Activated CD4-positive, alpha-beta T cell treated with anti-CD3 and anti-CD28 coated beads, Interleukin-2, amount 10 ng/mL, durations not matched to agents 24 days and 14 days (primary cell): ENCODE measurements at regions of chr19 and their contacts with region 1.

Region 1: DNA sequence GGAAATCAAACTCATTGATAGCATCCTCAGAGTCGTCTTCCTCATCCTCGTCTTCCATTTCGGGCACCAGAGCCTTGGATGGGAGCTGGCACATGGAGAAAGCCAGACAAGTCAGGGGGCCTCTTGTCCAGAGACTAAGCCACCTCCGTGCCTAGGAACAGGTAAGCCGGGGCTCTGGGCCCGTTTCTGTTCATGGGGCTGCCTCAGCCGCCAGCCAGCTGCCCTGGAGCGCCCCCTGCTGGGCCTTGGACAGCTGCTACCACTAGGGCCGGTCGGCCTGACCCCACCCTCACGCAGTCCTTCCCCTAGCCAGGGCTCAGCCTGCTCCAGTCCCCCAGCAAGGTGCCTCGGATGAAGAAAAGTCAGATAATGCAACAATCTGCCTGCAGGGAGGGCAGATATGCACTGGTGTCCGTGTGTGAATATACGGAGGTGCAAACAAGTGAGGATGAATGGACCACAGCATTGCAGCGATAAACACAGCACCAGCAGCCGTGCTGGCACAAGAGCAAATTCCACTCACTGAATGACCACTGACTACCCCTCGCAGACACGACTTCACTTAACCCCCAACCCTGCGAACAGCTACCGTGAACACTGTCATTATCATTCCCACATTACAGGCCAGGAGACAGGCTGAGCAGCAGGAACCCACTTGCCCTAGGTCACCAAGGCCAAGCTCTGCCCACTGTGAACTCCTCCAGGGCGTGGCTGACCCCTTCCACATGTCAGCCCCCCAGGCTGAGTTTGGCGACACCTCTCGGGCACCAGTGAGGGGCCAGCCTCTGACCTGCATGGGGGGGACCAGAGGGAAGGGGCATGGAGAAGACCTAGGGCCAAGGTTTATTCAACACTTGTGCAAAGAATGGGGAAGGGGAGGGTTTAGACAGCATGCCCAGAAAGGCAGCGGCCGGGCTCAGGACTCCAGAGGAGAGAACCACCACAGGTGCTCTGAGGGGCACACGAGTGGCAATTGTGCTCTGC is 12.1 kb upstream of the PRKD2 start:
- DNase-seq: peak; percentile 95
- H3K4me3 Mint-ChIP-seq: no peak overlapping the region
- H3K27ac Mint-ChIP-seq: no peak overlapping the region
- H3K4me1 Mint-ChIP-seq: peaks cover 20% of the 10 kb centered on the region
- H3K27me3 Mint-ChIP-seq: no peaks in the 10 kb centered on the region

Region 2: GRCh38 chr19:46704379-46705076 is 24.5 kb before region 1 on chr19:
- intact Hi-C with region 1: loop called (anchors 1 kb)
- DNase-seq: peak; percentile 96
- H3K4me3 Mint-ChIP-seq: no peak overlapping the region
- H3K27ac Mint-ChIP-seq: peak overlapping the region; percentile 82
- H3K4me1 Mint-ChIP-seq: peaks cover 12% of the 10 kb centered on the region
- H3K27me3 Mint-ChIP-seq: no peaks in the 10 kb centered on the region